ENCODE measurements at regions of chr18 and their contacts with region 1.

Region 1: DNA sequence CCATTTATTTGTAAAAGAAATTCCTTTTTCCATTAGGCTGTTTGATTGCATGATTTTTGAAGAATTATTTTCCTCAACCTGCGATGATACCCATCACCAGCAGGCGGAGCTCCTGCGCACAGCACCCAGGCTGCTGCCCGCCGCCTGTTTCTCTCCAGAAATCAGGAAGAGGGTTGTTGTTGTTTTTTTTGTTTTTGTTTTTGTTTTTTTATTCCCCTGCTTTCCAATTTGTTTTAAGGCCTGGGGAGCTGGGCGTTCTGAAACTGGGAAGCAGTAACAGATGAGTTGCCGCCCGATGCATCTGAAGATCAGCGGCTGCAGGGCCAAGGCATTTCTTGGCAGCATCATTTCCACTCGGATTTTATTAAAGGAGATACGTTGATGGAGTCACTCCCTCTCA is 132.1 kb downstream of the MBP start:
- DNase-seq: peak; percentile 74
- CTCF ChIP-seq: peak; percentile 96

Region 2: GRCh38 chr18:76963936-76964335 is 36.6 kb before region 1 on chr18:
- CTCF ChIA-PET with region 1: interaction called, 20 read pairs
- POLR2A ChIA-PET with region 1: no interaction called
- DNase-seq: no peak
- CTCF ChIP-seq: no peak

Region 3: DNA sequence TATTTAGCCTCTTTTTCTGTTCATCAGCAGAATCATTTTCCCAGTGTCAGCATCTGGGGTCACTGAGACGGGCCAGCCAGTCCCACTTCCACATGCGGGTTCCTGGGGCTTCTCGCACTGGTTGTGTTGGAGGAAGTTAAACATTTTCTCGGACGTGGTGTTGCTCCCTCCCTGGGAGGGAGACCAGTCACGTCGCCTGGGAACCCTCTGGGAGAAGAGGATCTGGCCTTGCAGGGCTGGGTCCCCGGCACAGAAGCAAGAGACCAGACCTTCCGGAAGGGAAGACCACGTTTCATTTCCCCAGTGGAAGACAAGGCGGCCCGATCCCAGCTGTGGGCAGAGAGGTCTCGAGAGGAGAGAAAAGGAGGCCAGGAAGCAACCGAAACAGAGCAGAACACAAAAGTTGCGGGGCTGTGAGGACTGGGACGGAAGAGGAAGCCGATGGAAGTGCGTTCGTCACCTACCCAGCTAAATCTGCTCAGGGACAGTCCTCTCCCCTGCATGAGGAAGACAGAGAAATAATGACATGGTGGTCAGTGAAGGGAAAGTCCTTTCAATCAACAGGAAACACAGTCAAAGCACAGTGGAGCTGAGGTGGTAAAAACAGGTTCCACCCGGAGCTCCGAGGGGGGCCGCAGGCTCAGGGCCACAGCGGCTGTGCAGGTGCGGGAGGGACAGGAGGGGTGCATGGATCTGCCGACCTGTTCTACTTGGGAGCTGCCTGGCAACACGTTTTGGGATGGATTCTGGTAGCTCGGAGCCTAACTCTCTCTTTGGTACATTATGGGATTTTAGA is 12.3 kb before region 1 on chr18:
- CTCF ChIA-PET with region 1: interaction called, 75 read pairs
- POLR2A ChIA-PET with region 1: no interaction called
- DNase-seq: no peak
- CTCF ChIP-seq: no peak

Region 4: GRCh38 chr18:77032181-77032701 is 31.7 kb after region 1 on chr18:
- CTCF ChIA-PET with region 1: interaction called, 12 read pairs
- POLR2A ChIA-PET with region 1: no interaction called
- DNase-seq: no peak
- CTCF ChIP-seq: no peak

Region 5: GRCh38 chr18:77067291-77068061 is 66.9 kb after region 1 on chr18:
- CTCF ChIA-PET with region 1: interaction called, 20 read pairs
- POLR2A ChIA-PET with region 1: no interaction called
- DNase-seq: no peak
- CTCF ChIP-seq: no peak